H1 (cell line): ENCODE measurements at regions of chr1 and their contacts with region 1.

Region 1: DNA sequence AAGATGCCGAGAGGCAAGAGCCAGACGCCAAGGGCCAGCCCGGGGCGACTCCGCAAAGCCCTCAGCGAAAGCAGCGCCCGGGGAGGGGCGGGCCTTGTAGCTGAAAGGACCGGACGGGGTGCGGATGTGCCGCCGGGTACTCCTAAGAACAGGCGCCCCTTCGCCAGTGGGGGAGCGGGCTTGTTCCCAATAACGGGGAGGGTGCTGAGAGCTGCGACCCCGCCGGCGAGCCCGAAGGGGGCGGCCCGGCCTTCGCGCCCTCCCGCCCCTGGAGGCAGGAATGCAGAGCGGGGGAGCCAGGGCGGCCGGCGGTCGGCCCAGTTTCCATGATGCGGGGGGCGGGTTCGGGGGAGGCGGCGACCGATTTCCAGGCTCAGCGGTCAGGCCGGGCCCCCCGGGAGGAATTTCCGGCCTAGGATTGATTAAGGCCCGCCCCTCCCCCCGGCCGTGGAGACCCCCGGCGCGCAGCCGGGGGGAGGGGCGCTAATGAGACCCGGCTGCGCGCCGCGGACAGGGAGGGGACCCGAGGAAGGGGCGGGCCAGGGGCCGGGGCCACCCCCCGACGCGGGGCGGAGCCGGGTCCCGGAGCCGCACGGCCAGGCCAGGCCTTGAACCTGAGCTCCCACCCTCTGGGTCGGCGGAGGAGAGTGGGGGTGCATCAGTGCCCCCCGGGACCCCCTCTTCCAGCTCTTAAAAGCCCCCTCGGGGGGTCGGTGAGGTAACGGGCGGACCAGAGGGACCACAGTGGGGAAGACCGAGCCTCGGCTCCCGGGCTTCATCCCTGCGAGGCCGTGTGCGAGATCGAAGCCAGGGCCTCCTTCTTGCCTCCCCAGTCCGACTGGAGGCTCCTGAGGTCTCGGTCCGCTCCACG is 898 bp upstream of the TMEM200B start:
- DNase-seq: peak; percentile 66 to 93
- H3K4me3 ChIP-seq: peak overlapping the region; percentile 51 to 91 (median 61)
- H3K27ac ChIP-seq: peak overlapping the region; percentile 48; the same call in 1 of the 2 replicates
- H3K4me1 ChIP-seq: peaks cover 0 to 19% (median 9%) of the 10 kb centered on the region in 4 experiments; a peak in 6 of 7 replicates
- H3K27me3 ChIP-seq: peaks cover 0 to 42% (median 25%) of the 10 kb centered on the region in 4 experiments; a peak in 6 of 7 replicates
- CTCF ChIP-seq: peak in 2 of 3 experiments; percentile 42 to 77; a peak in 3 of 4 replicates
- EP300 ChIP-seq: peak; percentile 36 to 82; a peak in 2 of 3 replicates
- POLR2A ChIP-seq: no peak; a peak in 1 of 3 replicates
- RAD21 ChIP-seq: peak in 1 of 2 experiments; percentile 23; a peak in 2 of 4 replicates

Region 2: GRCh38 chr1:29136391-29136915 is 11.9 kb after region 1 on chr1:
- CTCF ChIA-PET with region 1: interaction called, 13 read pairs
- POLR2A ChIA-PET with region 1: interaction called, 10 read pairs
- DNase-seq: no peak
- H3K4me3 ChIP-seq: no peak overlapping the region
- H3K27ac ChIP-seq: no peak overlapping the region
- H3K4me1 ChIP-seq: peaks cover 0 to 4% (median under 1%) of the 10 kb centered on the region in 4 experiments; a peak in 3 of 7 replicates
- H3K27me3 ChIP-seq: no peaks in the 10 kb centered on the region
- CTCF ChIP-seq: no peak
- EP300 ChIP-seq: no peak
- POLR2A ChIP-seq: no peak
- RAD21 ChIP-seq: no peak

Region 3: GRCh38 chr1:29398431-29398830 is 273.8 kb after region 1 on chr1:
- CTCF ChIA-PET with region 1: no interaction called
- POLR2A ChIA-PET with region 1: no interaction called
- DNase-seq: no peak
- H3K4me3 ChIP-seq: no peak overlapping the region
- H3K27ac ChIP-seq: no peak overlapping the region
- H3K4me1 ChIP-seq: 0 out of 7 replicates have a peak, but pooled peaks cover 0 to 2% (median 0%) of the 10 kb centered on the region in 4 experiments
- H3K27me3 ChIP-seq: no peaks in the 10 kb centered on the region
- CTCF ChIP-seq: no peak
- EP300 ChIP-seq: no peak
- POLR2A ChIP-seq: no peak
- RAD21 ChIP-seq: no peak